Ascending aorta (tissue), 2 donors: ENCODE measurements at regions of chr5 and their contacts with region 1.

Region 1: DNA sequence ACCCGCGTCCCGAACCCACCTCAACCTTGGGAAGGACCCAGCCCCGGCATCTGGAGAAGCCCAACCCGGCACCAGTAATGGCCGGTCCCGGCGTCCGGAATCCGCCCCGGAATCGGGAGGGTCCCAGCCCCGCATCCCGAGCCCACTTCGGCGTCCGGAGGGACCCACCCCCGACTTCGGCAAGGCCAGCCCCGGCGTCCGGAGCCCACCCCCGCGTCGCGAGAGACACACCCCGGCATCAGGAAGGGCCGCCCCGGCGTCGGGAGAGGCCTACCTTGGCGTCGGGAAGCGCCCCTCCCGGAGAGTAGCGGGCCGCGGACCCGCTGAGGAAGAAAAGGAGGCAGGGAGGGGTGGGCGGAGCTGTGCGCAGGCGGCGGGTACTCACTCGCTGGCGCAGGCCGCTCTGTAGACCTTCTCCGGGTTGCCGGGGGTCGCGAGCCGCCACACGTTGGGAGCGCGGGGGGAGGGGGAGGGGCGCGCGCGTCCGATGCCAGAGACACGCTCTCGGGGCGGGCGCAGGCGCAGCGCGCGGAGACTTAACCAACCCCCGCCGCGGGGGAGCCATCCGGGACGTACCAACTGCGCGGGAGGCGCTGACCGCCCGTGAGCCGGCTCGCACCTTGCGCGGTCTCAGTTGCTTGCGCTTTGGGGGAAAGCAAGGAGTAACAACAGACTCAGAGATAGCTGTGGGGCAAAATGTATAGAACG is at the start of gene UIMC1:
- DNase-seq: peak; percentile 42 to 94
- H3K4me3 ChIP-seq: peak within 1 kb of the TSS; percentile 81 to 94
- H3K27ac ChIP-seq: peak within 1 kb of the TSS; percentile 93 to 97
- H3K4me1 ChIP-seq: peaks cover 0 to 7% of the 10 kb centered on the region in 2 donors
- H3K27me3 ChIP-seq: no peaks in the 10 kb centered on the region
- CTCF ChIP-seq: no peak
- total RNA-seq, gene UIMC1: 32.5 TPM

Region 2: GRCh38 chr5:177022384-177023308 is 16.2 kb after region 1 on chr5 and contains the start of gene ZNF346:
- intact Hi-C with region 1: loop called (anchors 1 kb)
- DNase-seq: peak; percentile 59 to 94
- H3K4me3 ChIP-seq: peak within 1 kb of the TSS; percentile 89 to 99
- H3K27ac ChIP-seq: peak within 1 kb of the TSS; percentile 81 to 90
- H3K4me1 ChIP-seq: peaks cover 0 to 7% of the 10 kb centered on the region in 2 donors
- H3K27me3 ChIP-seq: no peaks in the 10 kb centered on the region
- CTCF ChIP-seq: peak; percentile 50 to 68 (median 54)
- total RNA-seq, gene ZNF346: 30.5 TPM